ENCODE measurements at regions of chr2 and their contacts with region 1.

Region 1: DNA sequence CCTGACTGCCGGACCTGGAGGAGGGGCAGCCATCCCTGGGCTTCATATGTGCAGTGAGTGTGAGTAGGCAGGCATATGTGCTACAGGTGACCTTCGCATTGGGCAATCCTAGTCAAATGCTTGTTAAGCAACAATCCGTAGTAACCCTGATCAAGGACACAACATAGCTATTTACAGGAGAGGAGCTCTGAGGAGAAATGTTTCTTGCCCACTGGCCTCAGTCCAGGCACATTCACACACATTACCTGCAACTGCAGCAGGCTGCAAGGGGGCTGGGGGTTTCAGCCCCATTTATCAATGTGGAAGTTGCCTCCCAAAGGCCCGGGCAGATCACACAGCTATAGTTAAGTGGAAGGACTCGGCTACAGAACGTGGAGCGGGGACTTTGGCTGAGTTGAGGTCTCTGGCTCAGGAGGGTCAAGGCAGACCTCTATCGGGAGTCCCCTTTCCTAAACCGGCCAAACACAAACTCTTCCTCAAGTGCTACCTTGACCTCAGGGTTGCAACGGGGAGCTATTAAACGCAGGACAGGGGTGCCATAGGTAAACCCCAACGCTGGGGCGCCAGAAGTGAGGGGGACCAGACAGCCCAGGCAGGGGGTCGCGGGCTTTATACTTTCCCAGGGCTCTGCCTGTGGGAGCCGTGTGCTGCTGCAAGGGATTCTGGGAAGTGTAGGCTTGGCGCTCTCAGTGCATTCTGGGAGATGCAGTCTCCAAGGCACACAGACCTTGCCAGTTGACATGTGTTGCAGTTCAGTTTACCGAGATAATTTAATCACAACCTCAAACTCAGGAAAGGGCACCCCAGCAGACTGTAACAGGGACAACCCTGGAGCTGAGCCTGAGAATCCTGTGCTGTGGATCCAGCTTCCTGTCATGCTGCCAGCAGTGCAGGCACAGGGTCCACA is 9.4 kb downstream of the KHK start:
- DNase-seq: peak; percentile 68 to 85 (median 78)
- ATAC-seq: peak; percentile 80 to 83
- H3K4me3 ChIP-seq: peak overlapping the region; percentile 41
- H3K27ac ChIP-seq: no peak overlapping the region
- H3K4me1 ChIP-seq: no peaks in the 10 kb centered on the region
- H3K27me3 ChIP-seq: no peaks in the 10 kb centered on the region

Region 2: DNA sequence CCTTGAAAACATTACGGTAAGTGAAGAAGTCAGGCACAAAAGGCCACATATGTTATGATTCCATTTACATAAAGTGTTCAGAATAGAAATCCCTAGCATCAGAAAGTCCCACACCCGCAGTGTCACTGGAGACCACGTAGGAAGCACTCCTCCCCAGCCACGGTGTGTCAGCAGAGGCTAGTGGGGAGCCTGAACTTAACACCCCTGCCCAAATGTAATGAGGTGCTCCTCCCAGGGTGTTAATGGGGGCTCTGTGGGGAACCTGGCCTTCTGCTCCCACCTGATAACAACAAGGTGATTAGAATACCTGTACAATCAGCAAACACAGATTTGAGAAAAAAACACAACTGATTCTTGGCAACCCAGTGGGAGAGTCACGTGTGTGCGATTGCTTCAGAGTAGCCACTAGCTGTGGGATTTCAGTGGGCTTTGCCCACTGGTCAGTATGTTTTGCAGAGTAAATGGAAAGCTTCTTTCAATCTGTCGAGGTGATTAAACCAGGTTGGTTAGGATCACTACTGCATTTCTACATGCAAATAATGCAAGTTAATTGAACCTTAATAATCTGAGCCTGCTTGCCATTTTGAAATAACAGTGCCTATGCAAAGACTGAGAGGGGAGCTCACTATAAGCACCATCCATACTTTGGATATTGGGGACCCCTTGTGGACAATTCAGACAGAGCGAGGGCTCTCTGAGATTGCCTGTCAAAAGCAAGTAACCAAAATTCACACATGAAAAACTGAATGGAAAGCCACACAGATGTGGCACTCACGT is 95.2 kb after region 1 on chr2:
- intact Hi-C with region 1: loop called (anchors 2 to 5 kb)
- DNase-seq: peak in 1 of 3 donors; percentile 64
- ATAC-seq: peak; percentile 83 to 89
- H3K4me3 ChIP-seq: no peak overlapping the region
- H3K27ac ChIP-seq: no peak overlapping the region
- H3K4me1 ChIP-seq: no peaks in the 10 kb centered on the region
- H3K27me3 ChIP-seq: no peaks in the 10 kb centered on the region

Region 3: DNA sequence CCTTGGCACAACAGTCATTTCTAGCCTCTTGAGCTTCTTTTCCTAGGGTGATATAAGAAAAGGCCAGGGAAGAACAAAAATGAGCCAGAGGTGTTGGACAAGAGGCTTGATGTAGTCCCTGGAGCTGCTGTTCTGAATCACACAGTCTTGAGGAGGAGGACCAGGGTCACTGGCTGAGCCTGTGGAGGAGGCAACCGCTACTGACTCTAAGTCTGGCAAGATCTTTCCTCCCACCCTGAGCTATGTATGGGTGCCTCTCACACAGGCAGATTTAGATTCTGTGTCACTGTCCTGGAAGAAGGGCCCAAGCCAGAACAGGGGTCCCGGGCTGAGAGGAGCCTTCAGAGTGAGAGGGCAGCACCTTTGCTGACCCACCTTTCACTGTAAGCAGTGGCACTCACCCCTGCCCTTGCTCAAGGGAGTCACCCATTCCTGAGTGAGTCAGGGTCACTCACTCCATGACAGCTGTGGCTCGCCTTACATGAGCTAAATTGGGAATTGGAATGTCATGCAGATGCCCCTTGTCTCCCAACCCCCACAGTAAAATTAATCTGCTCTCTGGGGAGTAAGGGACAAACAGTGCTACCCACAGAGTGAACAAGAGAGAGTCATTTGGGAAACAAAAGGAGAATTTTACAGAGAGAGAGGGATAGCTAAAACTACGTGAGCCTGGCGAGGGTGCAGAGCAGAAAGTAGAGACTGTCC is 186.0 kb after region 1 on chr2 and contains the start of gene TRIM54:
- intact Hi-C with region 1: loop called in 3 of 4 experiments (anchors 5 to 10 kb)
- DNase-seq: no peak
- ATAC-seq: peak; percentile 86 to 88
- H3K4me3 ChIP-seq: peak within 1 kb of the TSS; percentile 62
- H3K27ac ChIP-seq: peak within 1 kb of the TSS; percentile 99
- H3K4me1 ChIP-seq: no peaks in the 10 kb centered on the region
- H3K27me3 ChIP-seq: no peaks in the 10 kb centered on the region
- total RNA-seq, gene TRIM54: 101 to 188 (median 149) TPM

Measured in right cardiac atrium (tissue), 5 donors.